B cell (primary cell): ENCODE measurements at regions of chr18 and their contacts with region 1.

Region 1: DNA sequence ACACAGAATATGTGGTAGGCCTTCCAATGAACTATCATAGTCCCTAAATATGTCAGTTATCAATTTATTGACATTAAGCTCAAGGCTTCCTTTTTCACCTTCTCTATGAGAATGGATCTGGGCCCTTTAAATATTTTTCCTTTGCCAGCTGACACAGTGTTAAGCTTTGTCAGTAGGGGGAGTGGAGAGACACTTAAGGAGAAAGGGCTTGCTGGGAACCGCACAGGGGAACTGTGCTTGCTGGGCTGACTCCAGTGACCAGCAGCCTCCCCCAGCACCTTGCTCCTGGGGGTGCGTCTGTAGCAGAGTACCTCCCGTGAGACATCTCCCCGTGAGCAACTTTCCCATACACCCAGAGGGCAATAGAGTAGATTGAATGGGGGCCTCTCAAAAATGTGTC is 6.5 kb upstream of the PTPN2 start:
- DNase-seq: no peak
- ATAC-seq: no peak
- H3K4me3 ChIP-seq: no peak overlapping the region
- H3K4me3 Mint-ChIP-seq: no peak overlapping the region
- H3K27ac ChIP-seq: no peak overlapping the region
- H3K27ac Mint-ChIP-seq: no peak overlapping the region
- H3K4me1 ChIP-seq: peaks cover 11 to 19% of the 10 kb centered on the region in 2 donors
- H3K4me1 Mint-ChIP-seq: peaks cover 22% of the 10 kb centered on the region
- H3K27me3 ChIP-seq: peaks cover 0 to 14% (median 2%) of the 10 kb centered on the region in 4 experiments
- H3K27me3 Mint-ChIP-seq: peaks cover 6% of the 10 kb centered on the region
- CTCF ChIP-seq: no peak

Region 2: GRCh38 chr18:12433829-12434548 is 456.5 kb before region 1 on chr18:
- CTCF ChIA-PET with region 1: no interaction called
- POLR2A ChIA-PET with region 1: no interaction called
- intact Hi-C with region 1: no loop called
- DNase-seq: no peak
- ATAC-seq: no peak
- H3K4me3 ChIP-seq: no peak overlapping the region
- H3K4me3 Mint-ChIP-seq: no peak overlapping the region
- H3K27ac ChIP-seq: no peak overlapping the region
- H3K27ac Mint-ChIP-seq: no peak overlapping the region
- H3K4me1 ChIP-seq: no peaks in the 10 kb centered on the region
- H3K4me1 Mint-ChIP-seq: no peaks in the 10 kb centered on the region
- H3K27me3 ChIP-seq: no peaks in the 10 kb centered on the region
- H3K27me3 Mint-ChIP-seq: no peaks in the 10 kb centered on the region
- CTCF ChIP-seq: no peak

Region 3: GRCh38 chr18:12645254-12646203 is 245.0 kb before region 1 on chr18:
- CTCF ChIA-PET with region 1: no interaction called
- POLR2A ChIA-PET with region 1: no interaction called
- intact Hi-C with region 1: no loop called
- DNase-seq: no peak
- ATAC-seq: no peak
- H3K4me3 ChIP-seq: no peak overlapping the region
- H3K4me3 Mint-ChIP-seq: no peak overlapping the region
- H3K27ac ChIP-seq: no peak overlapping the region
- H3K27ac Mint-ChIP-seq: no peak overlapping the region
- H3K4me1 ChIP-seq: no peaks in the 10 kb centered on the region
- H3K4me1 Mint-ChIP-seq: no peaks in the 10 kb centered on the region
- H3K27me3 ChIP-seq: peaks cover 0 to 7% (median 3%) of the 10 kb centered on the region in 4 experiments
- H3K27me3 Mint-ChIP-seq: peaks cover 31% of the 10 kb centered on the region
- CTCF ChIP-seq: no peak

Region 4: DNA sequence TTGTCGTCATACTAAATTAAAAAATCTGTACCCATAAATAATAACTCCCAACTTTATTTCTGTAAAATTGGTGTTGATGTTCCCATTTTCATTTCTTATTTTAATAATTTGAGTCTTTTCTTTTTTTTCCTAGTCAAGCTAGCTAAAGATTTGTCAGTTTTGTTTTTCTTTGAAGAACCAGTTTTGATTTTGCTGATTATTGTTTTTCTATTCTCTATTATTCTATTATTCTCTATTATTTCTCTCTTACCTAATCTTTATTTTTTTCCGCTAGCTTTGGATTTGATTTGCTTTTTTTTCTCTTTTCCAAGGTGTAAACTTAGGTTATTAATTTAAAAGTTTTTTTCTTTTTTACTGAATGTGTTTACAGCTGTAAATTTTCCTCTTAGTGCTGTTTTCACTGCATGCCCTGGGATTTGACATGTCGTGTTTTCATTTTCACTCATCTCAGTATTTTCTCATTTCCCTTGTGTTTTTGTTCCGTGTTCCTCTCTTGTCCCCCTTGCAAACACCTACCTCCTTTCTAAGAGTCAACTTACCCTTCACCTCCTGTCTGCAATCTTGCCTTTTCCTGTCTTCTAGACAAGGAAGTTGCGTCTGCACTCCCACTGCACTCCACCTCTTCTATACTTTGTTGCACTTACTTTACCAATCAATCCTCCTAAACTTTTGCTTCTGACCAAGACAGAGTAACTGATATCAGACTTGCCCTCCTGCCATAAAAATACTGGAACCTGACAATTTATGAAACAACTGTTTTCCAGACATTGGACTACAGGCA is 168.8 kb before region 1 on chr18:
- CTCF ChIA-PET with region 1: interaction called, 55 read pairs
- POLR2A ChIA-PET with region 1: no interaction called
- intact Hi-C with region 1: no loop called
- DNase-seq: no peak
- ATAC-seq: no peak
- H3K4me3 ChIP-seq: no peak overlapping the region
- H3K4me3 Mint-ChIP-seq: no peak overlapping the region
- H3K27ac ChIP-seq: no peak overlapping the region
- H3K27ac Mint-ChIP-seq: peak overlapping the region; percentile 5
- H3K4me1 ChIP-seq: no peaks in the 10 kb centered on the region
- H3K4me1 Mint-ChIP-seq: no peaks in the 10 kb centered on the region
- H3K27me3 ChIP-seq: no peaks in the 10 kb centered on the region
- H3K27me3 Mint-ChIP-seq: no peaks in the 10 kb centered on the region
- CTCF ChIP-seq: no peak

Region 5: DNA sequence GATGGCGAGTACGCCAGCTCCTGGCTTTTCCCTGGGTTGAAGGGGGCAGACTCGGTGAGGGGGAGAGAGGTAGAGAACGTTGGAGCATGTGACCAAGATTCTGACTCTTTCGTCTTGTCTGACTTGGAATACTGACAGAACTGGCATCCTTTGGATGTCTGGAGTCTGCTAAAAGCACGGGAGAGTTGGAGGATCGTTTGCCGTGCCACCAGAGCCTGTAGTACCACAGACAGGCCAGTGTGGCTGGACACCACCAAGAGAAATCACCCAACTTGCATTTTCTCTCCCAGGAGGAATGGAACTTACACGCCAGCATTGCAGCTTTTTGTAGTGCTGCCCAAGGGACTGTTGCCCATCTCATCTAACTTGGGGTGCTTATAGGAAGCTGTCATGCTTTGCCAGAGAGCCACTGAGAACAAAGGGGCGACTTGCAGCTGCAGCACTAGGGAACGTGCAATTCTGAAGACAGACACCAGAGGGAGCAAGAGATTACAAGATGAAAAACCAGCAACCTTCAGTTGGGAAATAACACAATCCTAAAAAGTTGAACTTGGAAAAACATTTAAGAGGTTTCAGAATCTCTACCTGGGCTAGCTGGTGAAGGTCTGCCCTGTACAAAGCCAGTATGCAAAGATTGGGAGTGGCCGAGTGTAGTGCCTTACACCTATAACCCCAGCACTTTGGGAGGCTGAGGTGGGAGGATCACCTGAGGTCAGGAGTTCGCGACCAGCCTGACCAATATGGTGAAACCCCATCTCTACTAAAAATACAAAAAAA is 163.5 kb before region 1 on chr18:
- CTCF ChIA-PET with region 1: interaction called, 55 read pairs
- POLR2A ChIA-PET with region 1: no interaction called
- intact Hi-C with region 1: loop called (anchors 1 kb)
- DNase-seq: peak; percentile 77
- ATAC-seq: peak; percentile 61
- H3K4me3 ChIP-seq: no peak overlapping the region
- H3K4me3 Mint-ChIP-seq: no peak overlapping the region
- H3K27ac ChIP-seq: no peak overlapping the region
- H3K27ac Mint-ChIP-seq: no peak overlapping the region
- H3K4me1 ChIP-seq: no peaks in the 10 kb centered on the region
- H3K4me1 Mint-ChIP-seq: no peaks in the 10 kb centered on the region
- H3K27me3 ChIP-seq: no peaks in the 10 kb centered on the region
- H3K27me3 Mint-ChIP-seq: no peaks in the 10 kb centered on the region
- CTCF ChIP-seq: peak; percentile 93

Region 6: GRCh38 chr18:12744103-12744502 is 146.4 kb before region 1 on chr18:
- CTCF ChIA-PET with region 1: interaction called, 69 read pairs
- POLR2A ChIA-PET with region 1: no interaction called
- intact Hi-C with region 1: loop called (anchors 1 kb)
- DNase-seq: peak; percentile 59
- ATAC-seq: peak; percentile 57
- H3K4me3 ChIP-seq: no peak overlapping the region
- H3K4me3 Mint-ChIP-seq: no peak overlapping the region
- H3K27ac ChIP-seq: no peak overlapping the region
- H3K27ac Mint-ChIP-seq: no peak overlapping the region
- H3K4me1 ChIP-seq: peaks cover 0 to 2% of the 10 kb centered on the region in 2 donors
- H3K4me1 Mint-ChIP-seq: peaks cover 2% of the 10 kb centered on the region
- H3K27me3 ChIP-seq: peaks cover 0 to 5% (median 0%) of the 10 kb centered on the region in 4 experiments
- H3K27me3 Mint-ChIP-seq: peaks cover 8% of the 10 kb centered on the region
- CTCF ChIP-seq: peak; percentile 75

Region 7: DNA sequence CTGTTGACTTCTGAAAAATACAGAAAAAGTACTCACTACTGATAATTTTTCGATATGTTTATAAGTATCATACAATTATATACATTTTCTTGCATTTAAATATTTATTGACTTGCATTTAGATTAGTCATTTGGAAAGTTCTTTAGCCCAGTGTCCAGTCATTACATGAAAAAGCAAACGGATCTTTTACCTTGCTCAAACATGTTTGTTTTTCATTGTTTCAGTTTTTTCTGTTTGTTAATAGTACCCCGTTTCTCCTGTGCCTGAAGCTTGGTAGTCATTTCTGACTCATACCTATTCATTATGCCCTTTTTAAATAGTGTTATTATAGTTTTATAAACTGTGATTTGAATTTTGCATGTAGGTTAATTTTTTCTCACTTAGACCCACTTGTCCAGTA is 128.8 kb after region 1 on chr18:
- CTCF ChIA-PET with region 1: no interaction called
- POLR2A ChIA-PET with region 1: no interaction called
- intact Hi-C with region 1: no loop called
- DNase-seq: no peak
- ATAC-seq: no peak
- H3K4me3 ChIP-seq: no peak overlapping the region
- H3K4me3 Mint-ChIP-seq: no peak overlapping the region
- H3K27ac ChIP-seq: no peak overlapping the region
- H3K27ac Mint-ChIP-seq: no peak overlapping the region
- H3K4me1 ChIP-seq: no peaks in the 10 kb centered on the region
- H3K4me1 Mint-ChIP-seq: peaks cover 6% of the 10 kb centered on the region
- H3K27me3 ChIP-seq: no peaks in the 10 kb centered on the region
- H3K27me3 Mint-ChIP-seq: no peaks in the 10 kb centered on the region
- CTCF ChIP-seq: no peak

Region 8: DNA sequence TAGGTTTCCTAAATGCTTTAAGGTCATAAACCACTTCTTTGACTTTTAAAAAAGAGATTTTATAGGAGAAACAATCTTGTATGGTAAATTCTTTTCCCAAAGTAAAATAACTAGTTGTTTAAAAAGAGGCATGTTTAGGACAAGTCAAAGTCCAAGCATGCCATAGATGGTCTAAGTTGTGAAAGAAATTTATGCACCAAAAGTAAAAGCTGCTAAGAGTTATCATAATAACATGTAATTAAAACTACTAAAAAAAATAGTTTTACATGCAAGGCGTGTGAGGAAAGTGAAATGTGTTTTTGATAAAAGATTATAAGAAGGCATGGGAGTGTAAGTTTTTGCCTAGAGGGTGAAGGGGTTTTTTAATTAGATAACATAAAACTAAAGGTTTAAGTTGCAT is 813.4 kb after region 1 on chr18:
- CTCF ChIA-PET with region 1: no interaction called
- POLR2A ChIA-PET with region 1: no interaction called
- intact Hi-C with region 1: no loop called
- DNase-seq: no peak
- ATAC-seq: no peak
- H3K4me3 ChIP-seq: no peak overlapping the region
- H3K4me3 Mint-ChIP-seq: no peak overlapping the region
- H3K27ac ChIP-seq: no peak overlapping the region
- H3K27ac Mint-ChIP-seq: no peak overlapping the region
- H3K4me1 ChIP-seq: peaks cover 11 to 13% of the 10 kb centered on the region in 2 donors
- H3K4me1 Mint-ChIP-seq: peaks cover 14% of the 10 kb centered on the region
- H3K27me3 ChIP-seq: no peaks in the 10 kb centered on the region
- H3K27me3 Mint-ChIP-seq: no peaks in the 10 kb centered on the region
- CTCF ChIP-seq: no peak